ENCODE measurements at regions of chr12 and their contacts with region 1.

Region 1: GRCh38 chr12:89566630-89567151 is 40.8 kb upstream of the POC1B start:
- DNase-seq: no peak
- H3K4me3 Mint-ChIP-seq: no peak overlapping the region
- H3K27ac Mint-ChIP-seq: peak overlapping the region; percentile 56
- H3K4me1 Mint-ChIP-seq: peaks cover 42% of the 10 kb centered on the region
- H3K27me3 Mint-ChIP-seq: peaks cover 3% of the 10 kb centered on the region

Region 2: DNA sequence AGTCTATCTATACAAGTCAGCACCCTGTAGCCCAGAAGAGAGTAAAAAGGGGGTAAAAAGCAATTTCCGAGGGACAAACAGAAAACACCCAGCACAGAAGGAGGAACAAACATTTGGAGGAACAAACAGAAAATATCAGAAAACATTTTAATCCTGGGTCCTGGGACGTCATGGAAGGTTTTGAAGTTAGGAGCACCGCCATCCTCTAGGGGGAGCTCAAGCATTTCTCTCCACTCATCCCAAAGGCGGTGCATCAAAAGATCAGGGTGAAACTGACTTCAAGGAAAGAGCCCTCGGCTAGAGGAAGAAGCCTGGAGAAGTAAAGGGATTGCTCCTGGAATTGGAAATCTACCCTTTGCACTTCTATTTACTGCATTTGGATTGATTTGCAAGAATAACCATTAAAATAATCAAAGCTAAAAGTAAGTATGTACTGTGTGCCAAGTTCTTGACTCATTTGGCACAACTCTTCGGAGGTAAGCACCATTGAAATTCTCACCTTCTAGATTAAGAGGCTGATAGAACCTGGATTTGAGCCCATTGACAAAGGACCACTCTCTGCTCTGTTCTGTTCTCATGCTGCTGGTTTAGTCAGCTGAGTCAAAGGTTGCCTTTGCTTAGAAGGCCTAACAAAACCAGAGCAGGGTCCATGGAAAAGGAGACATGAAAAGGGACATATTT is 23.6 kb before region 1 on chr12:
- intact Hi-C with region 1: loop called (anchors 2 kb)
- DNase-seq: peak; percentile 35
- H3K4me3 Mint-ChIP-seq: no peak overlapping the region
- H3K27ac Mint-ChIP-seq: no peak overlapping the region
- H3K4me1 Mint-ChIP-seq: peaks cover 9% of the 10 kb centered on the region
- H3K27me3 Mint-ChIP-seq: no peaks in the 10 kb centered on the region

Region 3: GRCh38 chr12:89663577-89664357 is 97.1 kb after region 1 on chr12:
- intact Hi-C with region 1: loop called (anchors 5 kb)
- DNase-seq: no peak
- H3K4me3 Mint-ChIP-seq: peak overlapping the region; percentile 9
- H3K27ac Mint-ChIP-seq: peak overlapping the region; percentile 10
- H3K4me1 Mint-ChIP-seq: peaks cover 26% of the 10 kb centered on the region
- H3K27me3 Mint-ChIP-seq: no peaks in the 10 kb centered on the region

Region 4: GRCh38 chr12:89750514-89751351 is 184.0 kb after region 1 on chr12:
- intact Hi-C with region 1: no loop called
- DNase-seq: no peak
- H3K4me3 Mint-ChIP-seq: no peak overlapping the region
- H3K27ac Mint-ChIP-seq: no peak overlapping the region
- H3K4me1 Mint-ChIP-seq: no peaks in the 10 kb centered on the region
- H3K27me3 Mint-ChIP-seq: peaks cover 9% of the 10 kb centered on the region

Region 5: GRCh38 chr12:89856431-89856830 is 289.7 kb after region 1 on chr12:
- intact Hi-C with region 1: loop called (anchors 2 kb)
- DNase-seq: no peak
- H3K4me3 Mint-ChIP-seq: no peak overlapping the region
- H3K27ac Mint-ChIP-seq: no peak overlapping the region
- H3K4me1 Mint-ChIP-seq: peaks cover 33% of the 10 kb centered on the region
- H3K27me3 Mint-ChIP-seq: no peaks in the 10 kb centered on the region

Region 6: DNA sequence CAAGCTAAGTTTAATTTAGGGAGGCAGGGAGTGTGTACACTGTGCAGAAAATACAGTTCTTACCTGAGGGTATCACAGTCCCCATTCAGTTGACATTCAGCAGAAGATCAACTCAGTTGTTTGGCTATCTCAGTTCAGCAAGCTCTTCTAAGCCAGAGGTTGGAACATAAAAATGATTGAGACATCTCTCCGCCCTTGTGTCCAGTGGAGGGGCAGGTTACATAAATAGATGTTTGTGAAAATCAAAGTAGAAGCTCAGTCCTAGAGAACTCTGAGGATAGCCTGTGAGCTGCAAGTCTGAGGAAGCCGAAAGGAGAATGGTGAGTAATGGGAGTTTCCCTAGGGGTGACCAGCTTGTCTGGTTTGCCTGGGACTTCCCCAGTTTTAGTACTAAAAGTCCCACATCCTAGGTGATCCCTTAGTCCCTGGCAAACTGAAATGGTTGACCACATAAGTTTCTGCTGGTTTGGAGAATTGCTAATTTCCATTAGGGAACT is 393.4 kb after region 1 on chr12:
- intact Hi-C with region 1: loop called (anchors 5 kb)
- DNase-seq: no peak
- H3K4me3 Mint-ChIP-seq: no peak overlapping the region
- H3K27ac Mint-ChIP-seq: no peak overlapping the region
- H3K4me1 Mint-ChIP-seq: peaks cover 17% of the 10 kb centered on the region
- H3K27me3 Mint-ChIP-seq: peaks cover 17% of the 10 kb centered on the region

Region 7: GRCh38 chr12:90253674-90254181 is 687.0 kb after region 1 on chr12:
- intact Hi-C with region 1: loop called (anchors 10 kb)
- DNase-seq: peak; percentile 22
- H3K4me3 Mint-ChIP-seq: no peak overlapping the region
- H3K27ac Mint-ChIP-seq: no peak overlapping the region
- H3K4me1 Mint-ChIP-seq: peaks cover 7% of the 10 kb centered on the region
- H3K27me3 Mint-ChIP-seq: no peaks in the 10 kb centered on the region